AG04450 (cell line): ENCODE measurements at regions of chr12 and their contacts with region 1.

Region 1: DNA sequence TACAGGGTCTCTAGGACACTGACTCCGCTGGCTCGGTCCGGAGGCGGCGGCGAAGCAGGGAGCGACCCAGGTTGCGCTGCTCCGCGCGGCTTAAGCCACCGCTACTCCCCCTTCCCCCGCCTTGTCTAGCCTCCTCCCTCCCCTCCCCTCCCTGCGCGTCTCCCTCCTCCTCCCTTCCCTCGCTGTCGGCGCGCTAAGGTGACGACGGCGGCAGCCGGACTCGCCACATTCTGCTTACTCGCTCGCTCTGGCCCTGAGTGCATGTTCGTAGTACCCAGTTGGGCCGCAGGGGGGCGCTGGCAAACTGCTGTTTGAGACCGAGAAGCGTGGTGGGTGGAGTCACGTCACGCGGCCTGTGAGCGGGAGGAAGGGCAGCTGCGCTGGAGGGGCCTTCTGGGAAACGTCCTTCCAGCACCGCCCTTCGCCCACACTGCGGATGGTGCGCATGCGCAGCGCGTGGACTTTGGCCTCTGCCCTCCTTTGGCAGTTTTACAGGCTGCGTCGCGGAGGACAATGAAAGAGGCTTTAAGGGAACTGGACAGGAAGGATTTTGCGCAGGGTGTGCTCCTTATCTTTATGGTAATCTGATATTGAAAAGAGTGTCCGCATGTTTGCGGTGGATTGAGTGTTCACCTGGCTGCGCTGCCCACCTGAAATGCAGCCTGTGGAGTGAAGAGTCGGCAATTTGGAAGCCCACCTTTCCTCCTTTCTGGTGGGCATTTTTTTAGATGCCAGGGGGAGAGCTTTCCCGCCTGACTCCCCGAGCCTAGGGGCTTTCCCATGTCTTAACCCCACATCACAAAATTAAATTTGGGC is at the start of gene SCAF11:
- DNase-seq: peak; percentile 100
- H3K4me3 ChIP-seq: peak within 1 kb of the TSS; percentile 91
- H3K27ac ChIP-seq: peak within 1 kb of the TSS; percentile 98
- H3K27me3 ChIP-seq: no peaks in the 10 kb centered on the region
- CTCF ChIP-seq: peak; percentile 92
- polyA plus RNA-seq, gene SCAF11: 42.4 and 66.2 TPM in 2 replicates

Region 2: DNA sequence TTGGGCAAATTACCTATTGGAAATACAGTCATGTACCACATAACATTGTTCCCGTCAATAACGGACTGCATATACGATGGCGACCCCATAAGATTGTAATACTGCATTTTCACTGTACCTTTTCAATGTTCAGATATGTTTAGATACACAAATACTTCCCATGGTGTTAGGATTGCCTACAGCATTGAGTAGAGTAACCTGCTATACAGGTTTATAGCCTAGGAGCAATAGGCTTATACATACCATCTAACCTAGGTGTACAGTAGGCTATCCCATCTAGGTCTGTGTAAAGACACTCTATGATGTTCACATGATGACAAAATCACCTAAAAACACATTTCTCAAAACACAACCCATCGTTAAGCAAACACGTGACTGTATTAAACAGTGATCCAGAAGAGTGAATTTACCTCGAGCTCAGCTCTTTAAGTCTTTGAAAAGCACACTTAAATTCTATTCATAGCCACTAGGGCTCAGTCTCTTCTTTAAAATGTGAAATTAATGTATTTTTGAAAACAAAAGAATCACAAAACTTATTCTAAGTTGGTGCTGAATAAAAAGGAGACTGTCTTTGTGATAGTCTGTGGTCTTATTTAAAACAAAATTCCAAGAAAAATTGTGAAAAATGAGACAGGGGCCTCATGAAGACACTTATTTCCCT is 500.3 kb before region 1 on chr12:
- CTCF ChIA-PET with region 1: no interaction called
- POLR2A ChIA-PET with region 1: no interaction called
- DNase-seq: no peak
- H3K4me3 ChIP-seq: no peak overlapping the region
- H3K27ac ChIP-seq: no peak overlapping the region
- H3K27me3 ChIP-seq: no peaks in the 10 kb centered on the region
- CTCF ChIP-seq: no peak

Region 3: DNA sequence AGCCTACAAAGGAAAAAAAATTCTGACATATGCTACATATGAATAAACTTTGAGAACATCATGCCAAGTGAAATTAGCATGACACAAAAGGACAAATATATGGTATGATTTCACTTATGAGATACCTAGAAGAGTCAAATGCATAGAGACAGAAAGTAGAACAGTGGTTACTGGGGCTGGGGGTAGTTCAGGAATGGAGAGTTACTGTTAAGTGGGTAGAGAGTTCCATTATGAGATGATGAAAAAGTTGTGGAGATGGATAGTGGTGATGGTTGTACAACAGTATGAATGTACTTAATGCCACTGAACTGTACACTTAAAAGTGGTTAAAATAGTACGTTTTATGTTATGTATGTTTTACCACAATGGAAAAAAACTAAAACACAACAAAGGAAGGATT is 92.6 kb before region 1 on chr12:
- CTCF ChIA-PET with region 1: no interaction called
- POLR2A ChIA-PET with region 1: no interaction called
- DNase-seq: no peak
- H3K4me3 ChIP-seq: no peak overlapping the region
- H3K27ac ChIP-seq: no peak overlapping the region
- H3K27me3 ChIP-seq: no peaks in the 10 kb centered on the region
- CTCF ChIP-seq: no peak

Region 4: GRCh38 chr12:45973526-45973925 is 17.1 kb before region 1 on chr12:
- CTCF ChIA-PET with region 1: interaction called, 3 read pairs
- POLR2A ChIA-PET with region 1: interaction called, 10 read pairs
- DNase-seq: no peak
- H3K4me3 ChIP-seq: no peak overlapping the region
- H3K27ac ChIP-seq: no peak overlapping the region
- H3K27me3 ChIP-seq: no peaks in the 10 kb centered on the region
- CTCF ChIP-seq: no peak

Region 5: DNA sequence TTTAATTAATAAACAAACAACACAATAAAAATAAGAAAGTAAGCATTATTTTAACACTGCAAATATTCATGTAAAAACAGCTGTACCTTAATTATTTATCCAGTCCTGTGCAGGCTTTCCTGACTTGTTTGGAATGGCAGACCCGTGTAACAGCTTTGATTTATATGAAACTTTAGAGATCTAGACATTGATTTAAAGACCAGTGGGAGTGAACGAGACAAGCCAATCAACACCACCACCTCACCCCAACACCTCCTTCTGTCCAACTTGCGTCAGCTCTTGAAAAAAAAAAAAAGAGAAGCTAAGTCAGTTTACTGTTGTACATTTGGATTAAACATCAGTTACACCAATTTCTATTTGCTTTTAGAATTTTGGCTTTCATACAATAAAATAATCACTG is 812.8 kb after region 1 on chr12:
- CTCF ChIA-PET with region 1: interaction called, 11 read pairs
- POLR2A ChIA-PET with region 1: no interaction called
- DNase-seq: no peak
- H3K4me3 ChIP-seq: no peak overlapping the region
- H3K27ac ChIP-seq: no peak overlapping the region
- H3K27me3 ChIP-seq: no peaks in the 10 kb centered on the region
- CTCF ChIP-seq: no peak